ENCODE measurements at regions of chr14 and their contacts with region 1.

Region 1: GRCh38 chr14:71725922-71726579 is 206.2 kb upstream of the RGS6 start:
- DNase-seq: no peak
- ATAC-seq: peak in 1 of 2 donors; percentile 60

Region 2: DNA sequence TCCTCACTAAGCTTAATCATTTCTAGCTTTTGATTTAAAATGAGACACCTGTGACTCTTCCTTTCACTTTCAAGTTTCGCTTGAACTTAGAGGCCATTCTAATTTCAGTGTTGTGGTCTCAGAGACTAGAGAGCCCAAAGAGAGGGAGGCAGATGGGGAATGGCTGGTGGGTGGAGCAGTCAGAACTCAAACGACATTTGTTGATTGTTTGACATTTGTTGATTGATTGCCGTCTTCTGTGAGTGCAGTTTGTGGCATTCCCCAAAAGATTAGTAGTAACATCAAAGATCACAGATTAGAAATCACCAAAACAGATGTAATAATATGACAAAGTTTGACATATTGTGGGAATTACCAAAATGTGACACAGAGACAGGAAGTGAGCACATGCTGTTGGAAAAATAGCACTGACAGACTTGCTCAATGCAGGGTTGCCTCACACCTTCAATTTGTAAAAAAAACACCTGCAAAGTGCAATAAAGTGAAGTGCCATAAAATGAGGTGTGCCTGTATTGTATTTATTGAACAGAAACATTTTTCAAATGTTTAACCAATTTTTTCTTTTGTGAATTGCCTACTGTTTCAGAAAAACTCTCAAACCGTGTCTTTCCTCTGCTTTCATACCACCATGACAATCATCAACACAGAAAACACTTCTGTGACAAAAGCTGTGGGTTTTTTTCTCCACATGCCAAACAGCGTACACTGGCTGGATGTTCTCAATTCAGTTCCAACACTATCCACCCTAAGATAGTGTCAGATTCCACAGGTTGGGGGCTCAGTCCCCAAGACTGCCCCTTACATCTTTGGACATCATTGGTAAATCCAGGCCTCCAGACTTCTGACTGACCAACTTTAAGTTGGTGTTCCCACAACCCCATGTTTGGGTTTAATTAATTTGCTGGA is 170.1 kb before region 1 on chr14:
- intact Hi-C with region 1: no loop called
- DNase-seq: no peak
- ATAC-seq: no peak

Region 3: GRCh38 chr14:71855399-71856036 is 129.5 kb after region 1 on chr14:
- intact Hi-C with region 1: loop called in 1 of 2 experiments (anchors 2 kb)
- DNase-seq: peak; percentile 76
- ATAC-seq: peak in 1 of 2 donors; percentile 48

Measured in left cardiac atrium (tissue), 4 donors.